Common myeloid progenitor, CD34-positive (primary cell): ENCODE measurements at regions of chr12 and their contacts with region 1.

Region 1: GRCh38 chr12:57498132-57498502 is 10.2 kb downstream of the MARS1 start:
- DNase-seq: no peak
- H3K4me3 ChIP-seq: no peak overlapping the region
- H3K27ac ChIP-seq: no peak overlapping the region
- H3K4me1 ChIP-seq: no peaks in the 10 kb centered on the region
- H3K27me3 ChIP-seq: no peaks in the 10 kb centered on the region

Region 2: GRCh38 chr12:57005980-57006808 is 491.9 kb before region 1 on chr12 and contains the start of gene ZBTB39:
- CTCF ChIA-PET with region 1: no interaction called
- POLR2A ChIA-PET with region 1: no interaction called
- DNase-seq: peak; percentile 64 to 79 (median 73)
- H3K4me3 ChIP-seq: peak within 1 kb of the TSS; percentile 70 to 89 (median 81)
- H3K27ac ChIP-seq: peak within 1 kb of the TSS; percentile 55 to 77
- H3K4me1 ChIP-seq: peaks cover 9 to 30% (median 23%) of the 10 kb centered on the region in 4 experiments
- H3K27me3 ChIP-seq: no peaks in the 10 kb centered on the region

Region 3: GRCh38 chr12:57514720-57515467 is 16.8 kb after region 1 on chr12:
- CTCF ChIA-PET with region 1: interaction called, 4 read pairs
- POLR2A ChIA-PET with region 1: interaction called, 11 read pairs
- DNase-seq: no peak
- H3K4me3 ChIP-seq: no peak overlapping the region
- H3K27ac ChIP-seq: no peak overlapping the region
- H3K4me1 ChIP-seq: peaks cover 0 to 19% (median 17%) of the 10 kb centered on the region in 4 experiments
- H3K27me3 ChIP-seq: no peaks in the 10 kb centered on the region

Region 4: DNA sequence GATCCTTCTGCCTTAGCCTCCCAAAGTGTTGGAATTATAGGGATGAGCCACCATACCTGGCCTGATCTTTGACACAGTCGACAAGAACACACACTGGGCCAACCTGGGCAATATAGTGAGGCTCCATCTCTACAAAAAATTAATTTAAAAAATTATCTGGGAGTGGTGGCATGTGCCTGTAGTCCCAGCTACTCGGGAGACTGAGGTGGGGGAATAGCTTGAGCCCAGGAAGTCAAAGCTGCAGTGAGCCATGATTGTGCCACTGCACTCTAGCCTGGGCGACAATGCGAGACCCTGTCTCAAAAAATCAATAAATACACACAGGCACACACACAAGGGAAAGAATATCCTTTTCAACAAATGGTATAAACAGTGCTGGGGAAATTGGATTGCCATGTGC is 189.7 kb after region 1 on chr12:
- CTCF ChIA-PET with region 1: no interaction called
- POLR2A ChIA-PET with region 1: no interaction called
- DNase-seq: no peak
- H3K4me3 ChIP-seq: no peak overlapping the region
- H3K27ac ChIP-seq: no peak overlapping the region
- H3K4me1 ChIP-seq: peaks cover 0 to 4% (median 0%) of the 10 kb centered on the region in 4 experiments
- H3K27me3 ChIP-seq: peaks cover 0 to 6% (median 0%) of the 10 kb centered on the region in 5 experiments